Activated naive CD4-positive, alpha-beta T cell treated with anti-CD3 and anti-CD28 coated beads for 36 hours (primary cell): ENCODE measurements at regions of chr4 and their contacts with region 1.

Region 1: GRCh38 chr4:169485791-169486742 is 126.3 kb downstream of the NEK1 start:
- DNase-seq: peak; percentile 66
- H3K4me3 Mint-ChIP-seq: no peak overlapping the region
- H3K27ac Mint-ChIP-seq: no peak overlapping the region
- H3K4me1 Mint-ChIP-seq: no peaks in the 10 kb centered on the region
- H3K27me3 Mint-ChIP-seq: no peaks in the 10 kb centered on the region

Region 2: GRCh38 chr4:168694648-168695047 is 791.4 kb before region 1 on chr4:
- CTCF ChIA-PET with region 1: no interaction called
- intact Hi-C with region 1: loop called (anchors 10 kb)
- DNase-seq: no peak
- H3K4me3 Mint-ChIP-seq: no peak overlapping the region
- H3K27ac Mint-ChIP-seq: no peak overlapping the region
- H3K4me1 Mint-ChIP-seq: no peaks in the 10 kb centered on the region
- H3K27me3 Mint-ChIP-seq: no peaks in the 10 kb centered on the region

Region 3: DNA sequence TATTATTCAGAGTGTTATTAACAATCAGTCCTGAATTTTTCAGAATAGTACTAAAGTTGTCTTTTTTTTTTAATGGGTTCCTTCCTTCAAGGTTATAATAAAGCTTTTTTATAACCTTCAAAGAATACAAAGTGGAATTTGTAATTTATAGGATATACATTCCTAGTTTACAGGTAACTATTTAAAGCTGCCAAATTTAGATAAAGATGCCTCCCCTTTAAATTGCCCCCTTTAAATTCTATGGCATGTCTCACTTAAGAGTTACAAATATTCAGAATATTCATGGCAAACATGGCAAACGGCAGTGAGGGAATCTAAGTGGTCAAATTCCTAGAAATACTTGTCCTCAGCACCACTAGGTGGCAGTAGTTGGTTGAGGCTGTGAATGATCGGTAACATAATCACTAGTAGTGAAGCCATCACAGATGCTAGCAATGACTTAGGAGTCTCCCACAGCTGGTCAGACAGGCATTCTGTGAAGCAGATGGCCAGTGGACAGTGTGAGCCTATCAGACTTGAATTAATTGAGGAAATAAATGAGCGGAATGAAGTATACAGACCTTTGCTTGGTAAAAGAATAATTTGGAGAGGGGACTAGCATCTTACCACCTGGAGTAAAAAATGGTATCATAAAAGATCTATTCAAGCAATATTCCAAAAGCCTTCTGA is 562.4 kb before region 1 on chr4:
- CTCF ChIA-PET with region 1: interaction called, 28 read pairs
- intact Hi-C with region 1: loop called (anchors 1 kb)
- DNase-seq: peak; percentile 73
- H3K4me3 Mint-ChIP-seq: no peak overlapping the region
- H3K27ac Mint-ChIP-seq: no peak overlapping the region
- H3K4me1 Mint-ChIP-seq: peaks cover 2% of the 10 kb centered on the region
- H3K27me3 Mint-ChIP-seq: no peaks in the 10 kb centered on the region

Region 4: GRCh38 chr4:169270810-169271691 is 215.0 kb before region 1 on chr4 and contains the start of gene SH3RF1:
- CTCF ChIA-PET with region 1: no interaction called
- intact Hi-C with region 1: loop called (anchors 1 kb)
- DNase-seq: peak; percentile 49
- H3K4me3 Mint-ChIP-seq: peak within 1 kb of the TSS; percentile 77
- H3K27ac Mint-ChIP-seq: no peak within 1 kb of the TSS
- H3K4me1 Mint-ChIP-seq: peaks cover 3% of the 10 kb centered on the region
- H3K27me3 Mint-ChIP-seq: peaks cover 49% of the 10 kb centered on the region
- total RNA-seq, gene SH3RF1: 0.22 to 0.55 TPM